ENCODE measurements at regions of chr7 and their contacts with region 1.

Region 1: DNA sequence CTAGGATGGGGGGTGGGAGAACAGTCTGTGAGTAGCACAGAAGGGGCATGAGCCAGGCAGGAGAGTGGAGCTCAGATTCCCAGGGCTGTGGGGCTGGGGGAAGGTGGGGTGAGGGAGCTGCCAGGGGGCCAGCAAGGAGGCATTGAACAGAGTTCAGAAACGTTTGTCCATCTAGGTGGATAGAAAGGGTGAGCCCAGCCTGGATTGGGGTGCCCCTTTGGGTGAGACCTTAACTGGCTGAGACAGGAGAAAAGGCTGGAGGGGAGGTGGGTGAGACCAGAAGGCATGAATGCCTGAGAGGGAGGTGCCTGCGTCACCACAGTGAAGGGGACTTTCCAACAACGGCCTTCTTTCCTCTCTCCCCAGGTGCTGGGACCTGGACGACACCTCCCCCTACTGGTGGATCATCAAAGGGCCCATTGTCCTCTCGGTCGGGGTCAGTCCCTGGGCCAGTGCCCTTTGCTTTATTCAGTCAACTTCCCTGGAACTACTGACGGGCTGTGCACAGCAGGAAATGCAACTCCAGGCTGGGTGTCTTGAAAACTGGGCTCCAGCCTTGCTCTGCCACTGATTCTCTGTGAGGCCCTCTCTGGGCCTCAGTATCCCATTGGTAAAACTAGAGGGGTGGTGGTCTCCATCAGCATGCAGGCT is 11.0 kb downstream of the GHRHR start:
- DNase-seq: peak; percentile 62 to 79
- H3K4me3 ChIP-seq: no peak overlapping the region
- H3K27ac ChIP-seq: no peak overlapping the region
- H3K4me1 ChIP-seq: no peaks in the 10 kb centered on the region
- H3K27me3 ChIP-seq: no peaks in the 10 kb centered on the region
- CTCF ChIP-seq: peak; percentile 27 to 39 (median 32)
- POLR2A ChIP-seq: no peak

Region 2: DNA sequence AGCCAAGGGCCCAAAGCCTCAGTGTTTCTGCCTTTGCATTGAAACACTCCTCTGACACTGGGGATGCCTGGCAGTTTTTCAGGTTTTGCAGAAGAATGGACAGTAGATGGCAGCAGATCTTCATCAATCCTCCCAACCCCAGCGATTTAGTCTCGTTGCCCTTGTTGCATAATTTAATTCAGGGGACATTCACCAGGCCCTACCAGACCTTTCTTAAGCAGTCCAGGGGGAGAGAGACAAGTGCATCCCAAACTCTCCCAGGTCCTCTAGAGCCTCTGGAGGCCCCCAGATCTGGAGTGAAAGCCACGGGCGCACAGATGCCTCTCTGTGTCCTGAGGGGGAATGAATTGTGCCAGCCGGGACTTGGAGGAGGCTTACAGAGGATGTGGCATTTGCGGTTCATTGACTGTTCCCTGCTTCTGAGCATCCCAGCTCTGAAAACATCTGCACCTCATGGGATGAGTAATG is 173.9 kb before region 1 on chr7:
- intact Hi-C with region 1: loop called (anchors 5 kb)
- DNase-seq: peak in 1 of 2 donors; percentile 40
- H3K4me3 ChIP-seq: no peak overlapping the region
- H3K27ac ChIP-seq: no peak overlapping the region
- H3K4me1 ChIP-seq: peaks cover 63% of the 10 kb centered on the region
- H3K27me3 ChIP-seq: no peaks in the 10 kb centered on the region
- CTCF ChIP-seq: peak; percentile 72 to 81 (median 75)
- POLR2A ChIP-seq: no peak

Region 3: GRCh38 chr7:30824821-30825720 is 149.7 kb before region 1 on chr7:
- intact Hi-C with region 1: no loop called
- DNase-seq: peak in 1 of 2 donors; percentile 40
- H3K4me3 ChIP-seq: no peak overlapping the region
- H3K27ac ChIP-seq: no peak overlapping the region
- H3K4me1 ChIP-seq: no peaks in the 10 kb centered on the region
- H3K27me3 ChIP-seq: no peaks in the 10 kb centered on the region
- CTCF ChIP-seq: no peak
- POLR2A ChIP-seq: no peak

Region 4: DNA sequence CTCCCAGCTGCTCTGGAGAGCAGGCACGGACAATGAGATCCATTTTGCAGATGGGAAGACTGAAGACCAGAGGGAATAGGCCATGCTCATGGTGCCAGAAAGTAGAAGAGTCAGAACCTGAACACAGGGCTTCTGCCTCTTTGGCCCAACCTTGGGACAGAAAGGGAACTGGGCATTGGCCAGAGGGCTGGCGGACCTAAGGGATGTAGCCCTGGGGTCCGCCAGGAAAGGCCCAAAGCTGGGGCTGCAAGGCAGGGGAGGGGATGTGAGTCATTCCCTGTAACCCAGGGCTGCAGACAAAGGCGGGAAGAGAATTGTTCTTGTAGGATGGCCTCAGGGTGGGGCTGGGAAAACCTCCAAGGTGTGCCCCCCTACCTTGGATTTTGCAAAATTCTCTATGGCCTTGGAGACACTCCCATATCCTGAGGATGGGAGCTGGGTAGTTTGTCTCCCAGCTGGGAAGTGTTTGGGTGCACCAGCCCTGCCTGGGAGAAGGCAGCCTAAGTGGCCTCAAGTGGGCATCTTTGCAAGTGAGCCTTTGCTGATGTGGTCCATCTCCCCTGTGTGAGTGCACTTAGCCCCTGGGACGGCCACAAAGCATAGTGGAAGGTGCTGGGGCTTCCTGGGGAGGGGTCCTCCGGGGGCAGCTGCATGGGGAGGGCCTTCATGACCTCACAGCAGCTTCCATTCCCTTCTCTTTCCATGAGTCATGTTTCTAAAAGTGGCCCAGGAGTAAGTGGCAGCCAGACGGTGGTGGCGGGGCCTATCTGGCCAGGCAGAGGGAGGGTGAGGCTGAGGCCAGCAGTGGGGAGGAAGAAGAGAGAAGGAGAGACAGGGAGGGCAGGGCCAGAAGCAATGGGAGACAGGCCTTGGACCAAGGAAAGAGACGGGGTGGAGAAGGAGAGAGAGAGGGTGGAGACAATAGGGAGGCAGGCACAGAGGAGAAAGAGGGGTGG is 53.9 kb before region 1 on chr7:
- intact Hi-C with region 1: no loop called
- DNase-seq: peak in 1 of 2 donors; percentile 75
- H3K4me3 ChIP-seq: no peak overlapping the region
- H3K27ac ChIP-seq: peak overlapping the region; percentile 65
- H3K4me1 ChIP-seq: peaks cover 21% of the 10 kb centered on the region
- H3K27me3 ChIP-seq: no peaks in the 10 kb centered on the region
- CTCF ChIP-seq: no peak
- POLR2A ChIP-seq: no peak

Region 5: GRCh38 chr7:31151849-31152248 is 177.1 kb after region 1 on chr7:
- intact Hi-C with region 1: no loop called
- DNase-seq: no peak
- H3K4me3 ChIP-seq: no peak overlapping the region
- H3K27ac ChIP-seq: no peak overlapping the region
- H3K4me1 ChIP-seq: no peaks in the 10 kb centered on the region
- H3K27me3 ChIP-seq: no peaks in the 10 kb centered on the region
- CTCF ChIP-seq: no peak
- POLR2A ChIP-seq: no peak

Measured in vagina (tissue), 2 donors.